MCF 10A (cell line): ENCODE measurements at regions of chr3 and their contacts with region 1.

Region 1: DNA sequence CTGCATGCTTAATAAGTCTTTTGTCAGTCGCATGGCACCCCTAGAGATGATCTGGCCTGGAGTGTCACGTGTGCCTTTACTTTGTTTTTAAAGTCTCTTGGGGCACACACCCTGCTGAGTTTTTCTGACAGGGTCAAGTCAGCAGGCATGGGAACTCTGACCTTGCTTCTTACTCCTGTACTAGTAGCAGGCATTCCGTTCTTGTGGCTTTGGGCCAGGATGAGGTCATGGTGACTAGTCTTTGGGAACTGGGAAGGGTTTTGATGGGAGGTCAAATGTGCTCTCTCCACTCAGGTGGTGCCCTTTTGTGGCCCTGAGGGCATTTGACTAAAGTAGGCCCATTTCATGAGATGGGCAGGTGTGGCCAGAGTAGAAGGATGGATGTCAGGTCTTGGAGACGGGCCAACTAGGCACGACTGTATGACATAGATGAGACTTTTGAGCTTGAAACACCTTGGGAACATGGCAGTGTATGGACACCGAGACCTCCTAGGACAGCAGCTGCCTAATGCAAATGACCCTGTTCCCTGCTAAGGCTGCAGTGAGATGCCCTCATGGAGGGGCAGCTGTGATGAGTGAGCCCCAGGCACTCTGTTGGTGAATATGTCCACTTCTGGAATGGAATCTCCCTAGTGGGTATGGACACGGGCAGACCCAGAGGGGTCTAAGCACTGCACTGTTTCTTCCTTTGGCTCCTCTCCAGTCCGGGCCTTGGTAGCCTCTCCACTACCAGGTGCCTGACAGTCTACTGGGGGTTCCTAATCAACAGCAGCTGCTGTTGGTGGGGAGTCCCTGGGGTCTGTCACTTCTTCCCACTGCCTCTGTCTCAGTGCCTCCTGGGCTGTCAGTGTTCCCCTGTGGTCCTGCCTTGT is 16.4 kb downstream of the SRPRB start:
- DNase-seq: peak; percentile 93
- H3K4me3 Mint-ChIP-seq: no peak overlapping the region
- H3K27ac Mint-ChIP-seq: no peak overlapping the region
- H3K4me1 Mint-ChIP-seq: peaks cover 13% of the 10 kb centered on the region
- H3K27me3 Mint-ChIP-seq: no peaks in the 10 kb centered on the region
- CTCF ChIP-seq: peak; percentile 26

Region 2: DNA sequence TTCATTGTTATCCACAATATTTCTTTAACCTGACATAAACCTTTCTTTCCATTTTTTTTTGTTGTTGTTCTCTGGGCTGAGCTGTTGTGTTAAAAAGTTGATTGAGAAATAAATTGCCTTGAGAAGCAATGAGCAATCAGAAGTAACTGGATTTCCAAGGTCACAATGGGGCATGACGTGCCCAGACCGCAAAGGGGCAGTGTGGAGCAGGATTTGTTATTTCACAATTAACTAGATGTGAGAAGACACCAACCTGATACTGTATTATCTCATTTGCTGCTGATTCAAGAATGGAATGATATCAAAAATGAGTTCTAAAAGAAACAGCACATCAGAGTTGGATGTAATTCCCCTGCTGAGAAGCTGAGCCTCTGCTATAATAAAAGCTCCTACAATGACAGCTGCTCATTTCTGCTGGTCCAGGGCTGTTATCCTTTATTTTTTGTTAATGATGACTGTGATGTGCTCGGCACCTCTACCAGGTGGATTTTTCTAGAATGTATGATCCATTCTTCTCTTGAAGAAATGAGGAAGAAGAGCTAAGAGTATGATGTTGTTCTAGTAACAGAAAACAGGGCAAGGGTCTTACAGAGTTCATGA is 1815.3 kb before region 1 on chr3:
- CTCF ChIA-PET with region 1: no interaction called
- POLR2A ChIA-PET with region 1: no interaction called
- intact Hi-C with region 1: no loop called
- DNase-seq: peak; percentile 71
- H3K4me3 Mint-ChIP-seq: no peak overlapping the region
- H3K27ac Mint-ChIP-seq: no peak overlapping the region
- H3K4me1 Mint-ChIP-seq: no peaks in the 10 kb centered on the region
- H3K27me3 Mint-ChIP-seq: no peaks in the 10 kb centered on the region
- CTCF ChIP-seq: peak; percentile 39

Region 3: GRCh38 chr3:133492159-133492741 is 329.8 kb before region 1 on chr3:
- CTCF ChIA-PET with region 1: no interaction called
- POLR2A ChIA-PET with region 1: no interaction called
- intact Hi-C with region 1: no loop called
- DNase-seq: no peak
- H3K4me3 Mint-ChIP-seq: no peak overlapping the region
- H3K27ac Mint-ChIP-seq: no peak overlapping the region
- H3K4me1 Mint-ChIP-seq: peaks cover 19% of the 10 kb centered on the region
- H3K27me3 Mint-ChIP-seq: no peaks in the 10 kb centered on the region
- CTCF ChIP-seq: no peak

Region 4: DNA sequence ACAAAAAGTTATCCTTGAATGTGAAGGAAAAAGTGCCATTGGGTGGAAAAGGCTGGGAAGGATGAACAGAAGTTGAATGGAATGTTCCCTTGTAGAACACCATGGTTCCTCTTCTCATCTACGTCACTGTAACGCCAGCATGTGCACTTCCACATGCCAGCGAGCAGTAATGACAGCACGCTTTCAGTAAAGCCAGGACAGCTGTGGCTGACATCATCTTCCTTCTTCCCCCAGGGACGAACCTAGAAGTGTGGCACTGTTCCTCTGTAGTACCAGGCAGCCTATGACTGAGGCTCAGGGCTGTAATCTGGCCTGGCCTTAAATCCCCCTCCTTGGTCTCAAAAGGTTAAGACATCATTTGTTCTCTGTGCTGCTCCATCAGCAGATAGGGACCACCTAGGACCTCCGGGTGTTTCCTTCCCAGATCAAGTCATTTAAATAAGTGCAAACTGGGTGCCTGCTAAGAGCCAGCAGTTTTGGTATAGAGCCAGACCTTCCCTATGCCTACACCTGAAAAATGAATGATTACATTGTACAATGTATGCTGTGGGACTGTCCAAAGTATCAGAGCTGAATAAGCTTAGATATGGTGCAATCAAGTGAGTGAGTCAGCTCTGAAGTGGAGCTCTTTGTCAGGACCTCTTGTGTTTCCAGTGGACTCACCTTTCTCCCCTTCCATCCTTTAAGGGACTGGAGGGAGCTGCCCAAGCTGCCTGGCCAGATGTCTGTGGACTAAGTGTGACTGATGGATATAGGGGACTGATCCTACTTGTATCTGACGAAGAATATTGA is 22.0 kb before region 1 on chr3:
- CTCF ChIA-PET with region 1: interaction called, 19 read pairs
- POLR2A ChIA-PET with region 1: interaction called, 5 read pairs
- intact Hi-C with region 1: no loop called
- DNase-seq: peak; percentile 82
- H3K4me3 Mint-ChIP-seq: no peak overlapping the region
- H3K27ac Mint-ChIP-seq: no peak overlapping the region
- H3K4me1 Mint-ChIP-seq: peaks cover 18% of the 10 kb centered on the region
- H3K27me3 Mint-ChIP-seq: no peaks in the 10 kb centered on the region
- CTCF ChIP-seq: no peak

Region 5: DNA sequence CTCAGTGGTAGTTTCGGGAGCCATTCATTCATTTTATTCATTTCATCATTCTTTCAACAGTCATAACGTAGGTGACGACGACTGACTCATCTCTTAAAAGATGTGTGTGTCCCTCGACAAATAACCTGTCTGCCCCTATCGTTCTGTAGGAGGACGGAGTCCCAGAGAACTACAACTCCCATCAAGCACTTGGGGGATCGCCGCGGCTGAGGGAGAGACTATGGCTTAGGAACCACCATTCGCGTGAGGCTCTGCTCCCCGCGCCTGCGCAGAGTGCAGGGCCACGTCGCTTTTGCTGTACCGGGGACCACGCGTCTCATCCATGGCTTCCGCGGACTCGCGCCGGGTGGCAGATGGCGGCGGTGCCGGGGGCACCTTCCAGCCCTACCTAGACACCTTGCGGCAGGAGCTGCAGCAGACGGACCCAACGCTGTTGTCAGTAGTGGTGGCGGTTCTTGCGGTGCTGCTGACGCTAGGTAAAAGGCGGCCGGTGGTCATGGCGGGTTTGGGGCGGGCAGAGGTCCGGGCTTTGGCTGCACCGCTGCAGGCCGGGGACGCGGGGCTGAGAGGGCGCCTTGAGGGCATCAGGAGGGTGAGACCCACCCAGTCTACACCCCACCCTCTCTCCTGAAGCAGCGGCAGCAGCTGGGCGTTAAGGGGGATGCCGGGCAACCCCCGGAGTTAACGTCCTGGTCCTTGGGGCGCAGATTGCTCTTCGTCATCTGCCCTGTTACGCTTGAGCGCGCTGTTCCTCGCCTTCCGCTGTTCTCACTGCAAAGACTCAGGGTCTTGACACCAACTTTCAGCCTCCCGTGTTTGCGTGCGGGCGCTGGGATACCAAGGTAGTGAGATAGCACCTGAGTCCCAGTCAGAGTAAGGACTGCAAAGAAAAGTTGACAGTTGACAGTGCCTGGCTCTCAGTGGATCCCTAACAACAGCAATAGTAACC is 16.2 kb before region 1 on chr3 and contains the start of gene SRPRB:
- CTCF ChIA-PET with region 1: interaction called, 20 read pairs
- POLR2A ChIA-PET with region 1: interaction called, 8 read pairs
- intact Hi-C with region 1: no loop called
- DNase-seq: peak; percentile 96
- H3K4me3 Mint-ChIP-seq: peak within 1 kb of the TSS; percentile 85
- H3K27ac Mint-ChIP-seq: peak within 1 kb of the TSS; percentile 30
- H3K4me1 Mint-ChIP-seq: peaks cover 8% of the 10 kb centered on the region
- H3K27me3 Mint-ChIP-seq: no peaks in the 10 kb centered on the region
- CTCF ChIP-seq: no peak
- total RNA-seq, gene SRPRB: 180 and 212 TPM in 2 replicates